ENCODE measurements at regions of chr1 and their contacts with region 1.

Region 1: GRCh38 chr1:160460683-160461287 is 60.4 kb downstream of the VANGL2 start:
- DNase-seq: peak; percentile 60
- ATAC-seq: peak; percentile 60
- H3K4me3 Mint-ChIP-seq: peak overlapping the region; percentile 57
- H3K27ac Mint-ChIP-seq: peak overlapping the region; percentile 98
- H3K4me1 Mint-ChIP-seq: peaks cover 85% of the 10 kb centered on the region
- H3K27me3 Mint-ChIP-seq: no peaks in the 10 kb centered on the region

Region 2: GRCh38 chr1:160474392-160475242 is 13.8 kb after region 1 on chr1:
- CTCF ChIA-PET with region 1: interaction called, 15 read pairs
- POLR2A ChIA-PET with region 1: no interaction called
- intact Hi-C with region 1: loop called (anchors 1 kb)
- DNase-seq: no peak
- ATAC-seq: peak; percentile 93
- H3K4me3 Mint-ChIP-seq: no peak overlapping the region
- H3K27ac Mint-ChIP-seq: no peak overlapping the region
- H3K4me1 Mint-ChIP-seq: peaks cover 6% of the 10 kb centered on the region
- H3K27me3 Mint-ChIP-seq: no peaks in the 10 kb centered on the region

Region 3: DNA sequence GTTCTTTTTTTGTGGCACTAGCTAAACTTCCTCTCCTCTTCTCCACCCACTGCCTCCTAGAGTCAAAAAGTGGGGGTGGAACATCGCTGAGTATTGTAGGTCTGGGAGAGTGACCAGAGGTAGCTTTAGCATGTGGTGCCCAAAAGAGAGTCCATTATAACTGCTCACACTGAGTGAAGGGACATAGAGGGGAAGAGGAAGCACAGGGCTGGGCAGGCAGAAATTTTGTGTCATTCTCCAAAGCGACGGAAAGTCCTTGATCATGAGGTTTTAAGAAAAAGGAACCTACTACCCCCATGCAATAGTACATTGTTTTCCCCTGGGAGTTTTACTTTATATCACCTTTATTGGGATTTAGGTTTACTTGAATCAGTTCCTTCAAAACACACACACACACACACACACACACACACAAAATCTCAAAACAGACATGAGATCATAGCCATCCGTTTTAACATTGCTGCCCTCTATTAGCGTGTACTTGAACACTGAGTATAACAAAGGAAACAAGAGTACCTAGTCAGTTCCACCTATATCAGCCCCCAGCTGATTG is 114.4 kb after region 1 on chr1:
- CTCF ChIA-PET with region 1: interaction called, 3 read pairs
- POLR2A ChIA-PET with region 1: no interaction called
- intact Hi-C with region 1: loop called in 1 of 2 experiments (anchors 1 kb)
- DNase-seq: peak; percentile 28
- ATAC-seq: peak; percentile 50
- H3K4me3 Mint-ChIP-seq: peak overlapping the region; percentile 77
- H3K27ac Mint-ChIP-seq: peak overlapping the region; percentile 96
- H3K4me1 Mint-ChIP-seq: peaks cover 89% of the 10 kb centered on the region
- H3K27me3 Mint-ChIP-seq: no peaks in the 10 kb centered on the region

Region 4: GRCh38 chr1:161192476-161193465 is 732.0 kb after region 1 on chr1:
- CTCF ChIA-PET with region 1: no interaction called
- POLR2A ChIA-PET with region 1: no interaction called
- intact Hi-C with region 1: no loop called
- DNase-seq: peak; percentile 81
- ATAC-seq: peak; percentile 96
- H3K4me3 Mint-ChIP-seq: no peak overlapping the region
- H3K27ac Mint-ChIP-seq: peak overlapping the region; percentile 74
- H3K4me1 Mint-ChIP-seq: peaks cover 22% of the 10 kb centered on the region
- H3K27me3 Mint-ChIP-seq: no peaks in the 10 kb centered on the region